ENCODE measurements at regions of chr10 and their contacts with region 1.

Region 1: GRCh38 chr10:71893920-71894319 is 42.9 kb upstream of the PSAP start:
- DNase-seq: no peak
- ATAC-seq: no peak
- H3K4me3 Mint-ChIP-seq: no peak overlapping the region
- H3K27ac Mint-ChIP-seq: no peak overlapping the region
- H3K4me1 Mint-ChIP-seq: peaks cover 6% of the 10 kb centered on the region
- H3K27me3 Mint-ChIP-seq: peaks cover 16% of the 10 kb centered on the region

Region 2: GRCh38 chr10:71719042-71719441 is 174.9 kb before region 1 on chr10:
- CTCF ChIA-PET with region 1: no interaction called
- DNase-seq: no peak
- ATAC-seq: no peak
- H3K4me3 Mint-ChIP-seq: no peak overlapping the region
- H3K27ac Mint-ChIP-seq: no peak overlapping the region
- H3K4me1 Mint-ChIP-seq: peaks cover 13% of the 10 kb centered on the region
- H3K27me3 Mint-ChIP-seq: peaks cover 3% of the 10 kb centered on the region

Region 3: DNA sequence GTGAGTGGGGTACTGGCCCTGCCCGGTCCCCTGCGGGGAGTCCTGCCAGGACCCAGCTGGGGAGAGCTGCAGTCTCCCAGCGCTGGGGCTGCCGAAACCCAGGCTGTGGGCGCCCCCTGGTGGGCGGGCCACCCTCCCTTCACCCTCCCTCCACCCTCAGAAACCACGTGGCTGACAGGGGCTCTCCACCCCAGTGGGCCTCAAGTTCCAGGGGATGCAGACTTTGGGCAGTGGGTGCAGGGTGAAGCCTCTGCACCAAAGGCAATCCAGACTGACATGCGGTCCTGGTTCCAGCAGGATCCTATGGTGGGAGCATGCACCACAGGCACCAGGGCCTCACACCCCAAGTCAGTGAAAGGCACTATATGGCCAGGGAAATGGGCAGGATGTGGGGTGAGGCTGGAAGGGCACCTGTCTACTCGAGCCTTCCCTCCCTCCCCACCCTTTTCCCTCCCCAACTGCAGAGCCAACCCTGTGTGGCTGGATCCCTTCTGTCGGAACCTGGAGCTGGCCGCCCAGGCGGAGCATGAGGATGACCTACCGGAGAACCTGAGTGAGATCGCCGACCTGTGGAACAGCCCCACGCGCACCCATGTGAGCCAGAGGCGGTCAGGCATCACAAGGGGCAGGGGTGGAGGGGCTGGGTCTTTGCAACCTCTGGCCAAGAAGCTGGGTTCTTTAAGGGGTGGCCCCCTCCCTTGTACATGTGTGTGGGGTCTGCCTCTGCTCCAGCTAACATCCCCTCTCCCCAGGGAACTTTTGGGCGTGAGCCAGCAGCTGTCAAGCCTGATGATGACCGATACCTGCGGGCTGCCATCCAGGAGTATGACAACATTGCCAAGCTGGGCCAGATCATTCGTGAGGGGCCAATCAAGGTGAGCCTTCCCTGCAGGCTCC is 81.7 kb before region 1 on chr10:
- CTCF ChIA-PET with region 1: interaction called, 12 read pairs
- DNase-seq: peak; percentile 82
- ATAC-seq: peak; percentile 96
- H3K4me3 Mint-ChIP-seq: no peak overlapping the region
- H3K27ac Mint-ChIP-seq: no peak overlapping the region
- H3K4me1 Mint-ChIP-seq: peaks cover 5% of the 10 kb centered on the region
- H3K27me3 Mint-ChIP-seq: no peaks in the 10 kb centered on the region

Region 4: GRCh38 chr10:71829171-71829570 is 64.7 kb before region 1 on chr10:
- CTCF ChIA-PET with region 1: interaction called, 11 read pairs
- DNase-seq: no peak
- ATAC-seq: no peak
- H3K4me3 Mint-ChIP-seq: no peak overlapping the region
- H3K27ac Mint-ChIP-seq: no peak overlapping the region
- H3K4me1 Mint-ChIP-seq: peaks cover 7% of the 10 kb centered on the region
- H3K27me3 Mint-ChIP-seq: no peaks in the 10 kb centered on the region

Region 5: GRCh38 chr10:71845410-71846405 is 48.2 kb before region 1 on chr10:
- CTCF ChIA-PET with region 1: interaction called, 23 read pairs
- DNase-seq: no peak
- ATAC-seq: no peak
- H3K4me3 Mint-ChIP-seq: no peak overlapping the region
- H3K27ac Mint-ChIP-seq: no peak overlapping the region
- H3K4me1 Mint-ChIP-seq: peaks cover 40% of the 10 kb centered on the region
- H3K27me3 Mint-ChIP-seq: no peaks in the 10 kb centered on the region

Region 6: GRCh38 chr10:71860243-71861029 is 33.5 kb before region 1 on chr10:
- CTCF ChIA-PET with region 1: interaction called, 14 read pairs
- DNase-seq: peak; percentile 57
- ATAC-seq: peak; percentile 89
- H3K4me3 Mint-ChIP-seq: no peak overlapping the region
- H3K27ac Mint-ChIP-seq: peak overlapping the region; percentile 35
- H3K4me1 Mint-ChIP-seq: peaks cover 9% of the 10 kb centered on the region
- H3K27me3 Mint-ChIP-seq: no peaks in the 10 kb centered on the region

Region 7: GRCh38 chr10:71905164-71905563 is 11.2 kb after region 1 on chr10:
- CTCF ChIA-PET with region 1: interaction called, 21 read pairs
- DNase-seq: no peak
- ATAC-seq: no peak
- H3K4me3 Mint-ChIP-seq: no peak overlapping the region
- H3K27ac Mint-ChIP-seq: no peak overlapping the region
- H3K4me1 Mint-ChIP-seq: no peaks in the 10 kb centered on the region
- H3K27me3 Mint-ChIP-seq: peaks cover 11% of the 10 kb centered on the region

Region 8: DNA sequence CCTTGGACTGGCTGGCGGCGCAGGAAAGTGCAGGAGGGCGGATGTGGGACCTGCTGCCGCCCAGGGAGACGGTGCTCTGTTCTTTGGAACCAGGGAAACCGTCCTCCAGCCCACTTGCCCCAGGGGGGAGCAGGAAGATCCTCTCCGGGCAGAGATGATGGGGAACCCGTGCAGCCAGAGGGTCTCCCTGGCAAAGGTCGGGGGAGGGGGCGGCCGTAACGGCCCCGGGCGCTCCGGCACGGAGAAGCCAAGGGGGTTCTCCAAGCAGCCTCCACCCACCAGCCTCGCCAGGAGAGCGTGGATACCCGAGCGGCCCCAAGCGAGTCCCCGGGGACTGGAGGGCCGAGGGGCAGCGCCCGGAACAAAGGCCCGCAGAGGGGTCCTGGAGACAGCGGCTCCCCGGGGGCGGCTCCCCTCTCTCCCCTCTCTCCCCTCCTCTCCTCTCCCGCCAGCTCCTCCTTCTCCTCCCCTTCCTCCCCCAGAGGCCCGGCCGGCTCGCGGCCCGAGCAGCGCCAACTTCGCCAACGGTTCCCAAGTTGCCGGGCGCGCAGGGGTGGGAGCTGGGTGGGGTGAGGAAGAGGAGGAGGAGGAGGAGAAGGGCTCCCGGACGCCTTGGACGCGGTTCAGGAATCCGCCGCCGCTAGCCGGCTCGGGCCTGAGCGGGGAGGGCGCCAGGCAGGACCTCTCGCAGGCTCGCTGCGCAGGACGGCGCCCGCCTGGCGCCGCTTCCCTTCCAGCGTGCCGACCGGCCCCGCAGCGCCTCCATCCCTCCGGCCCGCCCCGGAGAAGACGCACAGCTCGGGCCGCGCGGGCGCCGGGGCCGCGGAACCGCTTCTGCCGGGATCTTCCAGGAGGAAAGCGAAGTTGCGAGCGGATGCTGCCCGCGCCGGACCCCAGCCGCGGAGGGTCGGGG is 70.1 kb after region 1 on chr10 and contains the start of gene CHST3:
- CTCF ChIA-PET with region 1: no interaction called
- DNase-seq: no peak
- ATAC-seq: peak; percentile 60
- H3K4me3 Mint-ChIP-seq: peak within 1 kb of the TSS; percentile 20
- H3K27ac Mint-ChIP-seq: no peak within 1 kb of the TSS
- H3K4me1 Mint-ChIP-seq: peaks cover 4% of the 10 kb centered on the region
- H3K27me3 Mint-ChIP-seq: peaks cover 80% of the 10 kb centered on the region
- total RNA-seq, gene CHST3: 0.05 TPM in 1 of 2 experiments, not detected in the other